K562 (cell line): ENCODE measurements at regions of chr15 and their contacts with region 1.

Region 1: GRCh38 chr15:36673987-36674386 is 94.6 kb downstream of the CDIN1 start:
- DNase-seq: no peak
- ATAC-seq: no peak
- H3K4me3 ChIP-seq: no peak overlapping the region
- H3K27ac ChIP-seq: no peak overlapping the region
- H3K4me1 ChIP-seq: no peaks in the 10 kb centered on the region
- H3K27me3 ChIP-seq: no peaks in the 10 kb centered on the region
- CTCF ChIP-seq: no peak
- EP300 ChIP-seq: no peak
- POLR2A ChIP-seq: no peak
- RAD21 ChIP-seq: no peak

Region 2: GRCh38 chr15:36658312-36658711 is 15.7 kb before region 1 on chr15:
- CTCF ChIA-PET with region 1: no interaction called
- POLR2A ChIA-PET with region 1: no interaction called
- in situ Hi-C with region 1: no loop called
- intact Hi-C with region 1: loop called (anchors 2 kb)
- DNase-seq: no peak
- ATAC-seq: no peak
- H3K4me3 ChIP-seq: no peak overlapping the region
- H3K27ac ChIP-seq: no peak overlapping the region
- H3K4me1 ChIP-seq: no peaks in the 10 kb centered on the region
- H3K27me3 ChIP-seq: no peaks in the 10 kb centered on the region
- CTCF ChIP-seq: no peak
- EP300 ChIP-seq: no peak
- POLR2A ChIP-seq: no peak
- RAD21 ChIP-seq: no peak